ENCODE measurements at regions of chr11 and their contacts with region 1.

Region 1: DNA sequence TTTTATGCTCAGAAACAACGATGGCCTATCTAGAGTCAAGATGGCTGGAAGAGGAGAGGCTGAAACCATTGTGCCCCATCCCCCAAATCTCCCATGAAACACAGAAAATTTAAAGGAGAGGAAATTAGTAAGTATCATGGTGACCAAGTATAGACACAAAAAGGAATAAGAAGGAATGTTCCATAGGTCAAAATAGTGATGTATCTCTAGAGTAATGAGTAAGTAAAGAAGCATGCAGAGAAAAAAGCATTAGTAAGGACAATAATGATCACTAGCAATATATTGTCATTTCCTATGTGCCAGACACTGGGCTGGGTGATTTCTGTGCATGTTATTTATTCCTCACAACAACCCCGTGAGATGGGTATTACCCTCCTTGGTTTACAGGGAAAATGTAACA is 2.6 kb upstream of the SLC22A24 start:
- DNase-seq: no peak
- H3K4me3 ChIP-seq: no peak overlapping the region
- H3K4me3 Mint-ChIP-seq: no peak overlapping the region
- H3K27ac ChIP-seq: no peak overlapping the region
- H3K27ac Mint-ChIP-seq: no peak overlapping the region
- H3K4me1 ChIP-seq: no peaks in the 10 kb centered on the region
- H3K4me1 Mint-ChIP-seq: no peaks in the 10 kb centered on the region
- H3K27me3 ChIP-seq: no peaks in the 10 kb centered on the region
- H3K27me3 Mint-ChIP-seq: peaks cover 3% of the 10 kb centered on the region in 2 donors

Region 2: DNA sequence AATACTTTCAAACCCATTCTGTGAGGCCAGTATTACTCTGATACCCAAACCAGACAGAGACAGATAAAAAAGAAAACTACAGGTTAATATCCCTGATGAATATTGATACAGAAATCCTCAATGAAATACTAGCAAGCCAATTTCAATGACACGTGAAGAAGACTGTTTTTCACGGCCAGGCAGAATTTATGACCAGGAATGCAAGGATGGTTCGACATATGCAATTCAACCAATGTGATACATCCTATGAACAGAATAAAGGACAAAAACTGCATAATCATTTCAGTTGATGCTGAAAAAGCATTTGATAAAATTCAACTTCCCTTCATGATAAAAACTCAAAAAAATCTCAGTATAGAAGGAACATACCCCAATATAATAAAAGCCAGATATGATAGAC is 47.0 kb before region 1 on chr11:
- CTCF ChIA-PET with region 1: no interaction called
- POLR2A ChIA-PET with region 1: no interaction called
- intact Hi-C with region 1: no loop called
- DNase-seq: no peak
- H3K4me3 ChIP-seq: no peak overlapping the region
- H3K4me3 Mint-ChIP-seq: no peak overlapping the region
- H3K27ac ChIP-seq: no peak overlapping the region
- H3K27ac Mint-ChIP-seq: no peak overlapping the region
- H3K4me1 ChIP-seq: no peaks in the 10 kb centered on the region
- H3K4me1 Mint-ChIP-seq: no peaks in the 10 kb centered on the region
- H3K27me3 ChIP-seq: peaks cover 3% of the 10 kb centered on the region
- H3K27me3 Mint-ChIP-seq: peaks cover 5 to 7% of the 10 kb centered on the region in 2 donors

Region 3: DNA sequence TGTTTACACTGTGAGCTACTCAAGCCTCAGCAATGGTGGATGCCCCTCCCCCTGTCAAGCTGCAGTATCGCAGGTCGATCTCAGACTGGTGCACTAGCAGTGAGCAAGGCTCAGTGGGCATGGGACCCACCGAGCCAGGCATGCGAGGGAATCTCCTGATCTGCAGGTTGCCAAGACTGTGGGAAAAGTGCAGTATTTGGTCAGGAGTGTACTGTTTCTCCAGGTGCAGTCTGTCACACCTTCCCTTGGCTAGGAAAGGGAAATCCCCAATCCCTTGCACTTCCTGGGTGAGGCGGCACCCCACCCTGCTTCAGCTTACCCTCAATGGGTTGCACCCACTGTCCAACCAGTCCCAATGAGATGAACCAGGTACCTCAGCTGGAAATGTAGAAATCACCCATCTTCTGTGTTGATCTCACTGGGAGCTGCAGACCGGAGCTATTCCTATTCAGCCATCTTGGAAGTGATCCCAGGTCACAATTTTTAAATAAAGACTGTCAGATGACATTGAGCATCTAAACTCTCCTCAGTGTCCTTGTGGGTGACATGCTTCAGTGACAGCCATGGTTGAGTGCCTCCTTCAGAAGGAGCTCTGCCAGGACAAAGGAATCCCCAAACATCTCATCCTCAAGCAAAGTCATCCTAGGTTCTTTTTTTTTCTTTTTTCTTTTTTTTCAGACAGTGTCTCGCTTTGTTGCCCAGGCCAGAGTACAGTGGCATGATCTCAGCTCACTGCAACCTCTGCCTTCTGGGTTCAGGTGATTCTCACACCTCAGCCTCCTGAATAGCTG is 13.4 kb before region 1 on chr11:
- CTCF ChIA-PET with region 1: no interaction called
- POLR2A ChIA-PET with region 1: no interaction called
- intact Hi-C with region 1: loop called (anchors 1 kb)
- DNase-seq: no peak
- H3K4me3 ChIP-seq: no peak overlapping the region
- H3K4me3 Mint-ChIP-seq: no peak overlapping the region
- H3K27ac ChIP-seq: no peak overlapping the region
- H3K27ac Mint-ChIP-seq: no peak overlapping the region
- H3K4me1 ChIP-seq: no peaks in the 10 kb centered on the region
- H3K4me1 Mint-ChIP-seq: no peaks in the 10 kb centered on the region
- H3K27me3 ChIP-seq: no peaks in the 10 kb centered on the region
- H3K27me3 Mint-ChIP-seq: peaks cover 24 to 47% of the 10 kb centered on the region in 2 donors

Measured in CD4-positive, alpha-beta memory T cell (primary cell).